WTC11 (cell line): ENCODE measurements at regions of chr1 and their contacts with region 1.

Region 1: GRCh38 chr1:17075470-17076255 is 21.8 kb upstream of the SDHB start:
- DNase-seq: peak; percentile 68
- ATAC-seq: peak; percentile 97
- H3K4me3 Mint-ChIP-seq: no peak overlapping the region
- H3K27ac Mint-ChIP-seq: no peak overlapping the region
- H3K4me1 Mint-ChIP-seq: 0 out of 2 replicates have a peak, but pooled peaks cover 3% of the 10 kb centered on the region
- H3K27me3 Mint-ChIP-seq: no peaks in the 10 kb centered on the region; the same call in 1 of the 2 replicates
- CTCF ChIP-seq: peak; percentile 43

Region 2: DNA sequence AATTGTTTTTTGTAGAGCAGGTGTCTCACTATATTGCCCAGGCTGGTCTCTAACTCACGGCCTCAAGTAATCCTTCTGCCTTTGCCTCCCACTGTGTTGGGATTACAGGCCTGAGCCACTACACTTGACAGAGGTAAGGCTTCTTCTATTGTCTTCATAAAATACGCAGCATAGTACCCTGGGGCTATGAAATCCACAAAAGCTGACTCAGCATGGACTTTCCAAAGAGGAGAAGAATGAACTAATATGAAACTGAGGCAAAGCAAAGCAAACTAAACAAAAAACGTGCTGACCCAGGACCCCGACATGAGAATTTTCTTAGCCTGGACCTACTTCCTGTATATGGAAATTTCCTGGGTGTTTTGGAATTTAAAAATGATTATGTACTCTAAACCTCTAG is 45.5 kb before region 1 on chr1:
- CTCF ChIA-PET with region 1: no interaction called
- POLR2A ChIA-PET with region 1: no interaction called
- DNase-seq: no peak
- ATAC-seq: no peak
- H3K4me3 Mint-ChIP-seq: no peak overlapping the region
- H3K27ac Mint-ChIP-seq: no peak overlapping the region; the same call in 1 of the 2 replicates
- H3K4me1 Mint-ChIP-seq: no peaks in the 10 kb centered on the region
- H3K27me3 Mint-ChIP-seq: no peaks in the 10 kb centered on the region
- CTCF ChIP-seq: no peak

Region 3: DNA sequence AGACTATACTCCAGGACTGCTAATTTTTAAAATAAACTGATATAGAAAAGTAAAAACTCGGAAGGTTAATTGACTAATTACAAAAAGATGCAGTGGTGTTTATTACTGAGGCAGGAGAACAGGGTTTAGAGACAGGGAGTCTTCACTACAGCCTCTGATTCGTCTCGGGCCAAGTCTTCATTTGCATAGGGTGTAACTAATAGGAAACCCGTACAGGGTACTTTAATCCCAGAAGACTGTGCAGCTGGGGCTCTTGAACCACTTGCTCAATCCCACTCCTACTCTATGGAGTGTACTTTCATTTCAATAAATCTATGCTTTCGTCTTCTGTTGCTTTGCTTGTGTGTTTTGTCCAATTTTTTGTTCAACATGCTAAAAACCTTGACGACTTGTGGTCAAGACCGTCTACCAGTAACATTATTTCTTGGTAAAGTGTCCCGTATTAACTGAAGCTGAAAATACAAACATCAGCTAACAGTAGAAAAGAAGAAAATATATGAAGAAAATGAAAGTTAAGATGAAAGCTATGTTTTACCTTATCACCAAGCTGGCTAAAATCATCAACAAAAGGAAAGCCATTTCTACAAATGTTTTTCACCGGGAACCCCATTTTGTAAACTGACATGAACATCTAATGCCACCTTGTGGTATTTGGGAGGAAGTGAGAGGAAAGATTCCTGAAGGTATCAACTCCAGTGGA is 29.9 kb before region 1 on chr1:
- CTCF ChIA-PET with region 1: no interaction called
- POLR2A ChIA-PET with region 1: no interaction called
- DNase-seq: no peak
- ATAC-seq: peak; percentile 26; the same call in 1 of the 2 replicates
- H3K4me3 Mint-ChIP-seq: no peak overlapping the region
- H3K27ac Mint-ChIP-seq: peak overlapping the region; percentile 82
- H3K4me1 Mint-ChIP-seq: peaks cover 4% of the 10 kb centered on the region
- H3K27me3 Mint-ChIP-seq: no peaks in the 10 kb centered on the region
- CTCF ChIP-seq: no peak

Region 4: GRCh38 chr1:17059739-17060460 is 15.8 kb before region 1 on chr1:
- CTCF ChIA-PET with region 1: interaction called, 28 read pairs
- POLR2A ChIA-PET with region 1: no interaction called
- DNase-seq: peak; percentile 83
- ATAC-seq: peak; percentile 99
- H3K4me3 Mint-ChIP-seq: no peak overlapping the region
- H3K27ac Mint-ChIP-seq: peak overlapping the region; percentile 17; the same call in 1 of the 2 replicates
- H3K4me1 Mint-ChIP-seq: peaks cover 39% of the 10 kb centered on the region
- H3K27me3 Mint-ChIP-seq: no peaks in the 10 kb centered on the region
- CTCF ChIP-seq: peak; percentile 50; the same call in 1 of the 2 replicates

Region 5: DNA sequence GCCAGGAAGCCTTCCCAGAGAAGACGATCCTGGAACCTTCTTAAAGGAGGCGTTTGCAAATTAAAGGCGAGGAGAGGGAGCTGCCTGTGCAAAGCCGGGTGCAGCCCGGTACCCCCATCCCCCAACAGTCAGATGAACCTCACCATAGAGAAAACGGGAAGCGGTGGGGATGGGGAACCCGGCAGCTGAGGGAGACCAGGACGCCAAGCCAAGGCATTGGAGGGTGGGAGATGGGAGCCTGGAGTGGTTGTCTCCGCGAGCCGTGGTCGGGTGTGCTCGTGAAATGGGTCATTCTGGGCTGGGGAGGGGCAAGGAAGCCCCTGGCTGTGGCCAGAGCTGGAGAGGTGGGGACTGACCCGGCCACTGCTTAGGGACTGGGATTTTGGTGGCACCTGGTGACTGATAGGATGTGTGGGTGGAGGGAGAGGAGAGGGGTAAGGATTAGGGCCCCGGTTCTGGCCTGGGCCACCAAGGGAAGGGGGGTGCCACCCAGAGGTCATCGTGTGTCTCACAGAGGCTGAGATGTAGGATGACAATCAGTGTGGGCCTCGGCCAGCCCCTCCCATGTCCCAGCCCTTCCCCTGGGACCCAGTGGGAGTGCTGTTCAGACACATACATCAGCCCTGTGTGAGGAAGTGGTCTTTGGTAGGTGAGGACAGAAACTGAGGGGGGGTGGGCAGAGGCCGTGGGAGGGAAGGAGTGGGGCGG is 44.3 kb after region 1 on chr1:
- CTCF ChIA-PET with region 1: interaction called, 16 read pairs
- POLR2A ChIA-PET with region 1: no interaction called
- DNase-seq: no peak
- ATAC-seq: peak; percentile 24
- H3K4me3 Mint-ChIP-seq: peak overlapping the region; percentile 79
- H3K27ac Mint-ChIP-seq: no peak overlapping the region
- H3K4me1 Mint-ChIP-seq: peaks cover 19% of the 10 kb centered on the region
- H3K27me3 Mint-ChIP-seq: peaks cover 54% of the 10 kb centered on the region
- CTCF ChIP-seq: no peak

Region 6: DNA sequence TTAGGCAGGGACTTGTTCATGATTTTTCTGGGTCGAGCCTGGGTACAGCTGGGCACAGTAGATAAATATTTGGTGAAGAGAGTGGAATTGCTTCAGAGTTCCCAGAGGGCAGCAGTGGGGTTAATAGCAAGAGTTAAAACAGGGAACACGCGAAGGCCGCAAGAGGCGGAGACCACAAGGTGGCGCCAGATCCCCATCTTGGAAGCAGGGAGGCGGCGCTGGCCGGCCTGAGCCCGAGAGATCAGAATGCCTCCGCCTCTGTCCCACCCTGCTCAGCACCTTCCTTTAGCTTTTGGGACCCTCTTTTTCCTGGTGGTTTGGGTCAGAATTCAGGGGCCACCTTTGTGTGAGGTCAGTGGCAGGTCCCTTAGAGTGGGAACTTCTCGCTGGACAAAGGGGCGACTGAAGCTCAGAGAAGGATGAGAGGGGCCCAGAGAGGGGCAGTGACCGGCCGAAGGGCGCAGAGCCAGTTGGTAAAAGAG is 50.1 kb after region 1 on chr1:
- CTCF ChIA-PET with region 1: interaction called, 16 read pairs
- POLR2A ChIA-PET with region 1: no interaction called
- DNase-seq: peak; percentile 96
- ATAC-seq: peak; percentile 84
- H3K4me3 Mint-ChIP-seq: no peak overlapping the region
- H3K27ac Mint-ChIP-seq: peak overlapping the region; percentile 79; the same call in 1 of the 2 replicates
- H3K4me1 Mint-ChIP-seq: peaks cover 39% of the 10 kb centered on the region
- H3K27me3 Mint-ChIP-seq: peaks cover 7% of the 10 kb centered on the region; the same call in 1 of the 2 replicates
- CTCF ChIP-seq: peak; percentile 96

Region 7: DNA sequence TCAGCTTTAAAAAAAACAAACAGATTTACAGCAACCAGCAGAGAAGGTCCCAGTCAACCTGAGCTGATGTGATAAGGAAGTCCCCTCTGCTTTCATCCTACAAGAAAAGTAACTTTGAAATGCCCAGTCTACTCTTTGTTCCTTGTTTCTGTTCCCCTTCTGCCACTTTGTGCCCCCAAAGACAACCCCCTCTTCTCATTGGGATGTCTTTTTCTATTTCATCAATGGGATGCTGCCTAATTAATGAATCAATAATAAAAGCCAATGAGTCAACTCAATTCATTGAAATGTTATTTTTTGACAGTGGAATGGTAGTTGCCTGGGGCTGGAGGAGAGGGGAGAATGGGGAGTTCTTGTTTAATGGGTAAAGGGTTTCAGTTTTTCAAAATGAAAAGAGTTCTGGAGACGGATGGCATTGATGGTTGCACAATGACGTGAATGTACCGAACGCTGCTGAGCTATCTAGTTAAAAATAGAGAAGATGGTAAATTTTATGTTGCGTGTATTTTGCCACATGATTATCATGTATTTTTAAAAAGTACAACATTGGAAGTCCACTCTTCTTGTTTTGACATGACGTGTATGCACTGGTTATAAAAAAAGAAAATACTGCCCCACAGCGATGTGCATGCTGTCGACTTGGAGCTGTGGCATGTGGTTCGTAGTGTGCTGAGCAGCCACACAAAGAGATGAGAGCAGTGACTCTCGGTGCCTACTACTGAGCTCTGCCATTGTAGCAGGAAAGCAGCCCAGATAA is 66.0 kb after region 1 on chr1:
- CTCF ChIA-PET with region 1: no interaction called
- POLR2A ChIA-PET with region 1: no interaction called
- DNase-seq: no peak
- ATAC-seq: no peak
- H3K4me3 Mint-ChIP-seq: no peak overlapping the region
- H3K27ac Mint-ChIP-seq: no peak overlapping the region
- H3K4me1 Mint-ChIP-seq: peaks cover 10% of the 10 kb centered on the region
- H3K27me3 Mint-ChIP-seq: no peaks in the 10 kb centered on the region; the same call in 1 of the 2 replicates
- CTCF ChIP-seq: no peak

Region 8: DNA sequence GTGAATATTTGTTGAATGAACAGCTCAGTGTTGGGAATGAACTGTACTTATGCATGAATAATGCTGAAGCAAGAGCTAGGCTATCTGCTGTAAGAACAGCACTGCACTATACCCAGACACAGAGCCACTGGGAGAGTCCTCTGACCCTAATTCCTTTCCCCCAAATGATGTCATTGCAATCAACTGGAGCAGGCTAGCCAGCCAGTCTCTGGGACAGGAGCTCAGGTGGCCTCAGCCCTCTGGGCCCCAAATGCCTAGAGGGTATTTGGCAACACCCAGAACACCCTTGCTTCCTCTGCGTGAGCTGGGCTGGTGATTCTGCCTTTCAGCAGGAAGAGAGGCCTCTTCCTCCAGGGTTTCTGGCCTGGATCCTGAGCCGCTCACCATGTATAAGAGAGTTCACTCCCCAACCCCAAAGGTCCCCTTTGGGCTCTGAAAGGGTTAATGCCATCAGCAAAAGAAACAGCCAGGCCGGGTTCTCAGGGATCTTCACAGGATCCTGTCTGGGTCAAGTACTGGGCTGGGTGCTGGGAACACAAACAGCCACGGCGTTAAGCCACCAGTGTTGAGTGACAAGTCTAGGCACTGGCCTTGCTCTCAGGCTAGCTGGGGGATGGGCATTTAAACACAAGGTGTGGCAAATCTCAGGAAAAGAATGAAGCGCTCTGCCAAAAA is 228.6 kb after region 1 on chr1:
- CTCF ChIA-PET with region 1: no interaction called
- POLR2A ChIA-PET with region 1: no interaction called
- DNase-seq: no peak
- ATAC-seq: no peak
- H3K4me3 Mint-ChIP-seq: no peak overlapping the region
- H3K27ac Mint-ChIP-seq: no peak overlapping the region
- H3K4me1 Mint-ChIP-seq: peaks cover 17% of the 10 kb centered on the region
- H3K27me3 Mint-ChIP-seq: peaks cover 6% of the 10 kb centered on the region
- CTCF ChIP-seq: no peak